Panc1 (cell line): ENCODE measurements at regions of chr5 and their contacts with region 1.

Region 1: GRCh38 chr5:142769741-142770631 is at the start of gene ARHGAP26:
- DNase-seq: no peak
- ATAC-seq: peak; percentile 96
- H3K4me3 ChIP-seq: peak within 1 kb of the TSS; percentile 58 to 80
- H3K27ac ChIP-seq: peak within 1 kb of the TSS; percentile 94
- H3K4me1 ChIP-seq: peaks cover 22% of the 10 kb centered on the region
- H3K27me3 ChIP-seq: no peaks in the 10 kb centered on the region
- CTCF ChIP-seq: peak; percentile 48
- total RNA-seq, gene ARHGAP26: 65.5 TPM

Region 2: DNA sequence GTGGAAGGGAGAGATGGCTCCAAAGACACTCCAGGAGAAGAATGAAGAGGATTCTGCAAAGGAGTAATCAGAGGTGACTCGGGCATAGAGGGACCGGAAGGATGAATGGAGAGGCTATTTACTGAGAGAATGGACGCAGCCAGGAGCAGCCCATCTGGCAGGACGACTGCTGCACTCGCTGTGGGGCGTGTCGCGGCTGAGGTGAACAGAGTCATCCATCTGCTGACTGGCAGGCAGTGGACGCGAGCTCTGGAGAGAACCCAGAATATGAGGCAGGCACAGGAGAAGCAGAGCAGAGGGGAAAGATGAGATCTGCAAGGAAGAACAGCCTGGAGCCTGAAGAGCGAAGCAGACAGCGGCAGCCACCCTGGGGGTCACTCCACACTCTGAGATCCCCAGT is 100.5 kb before region 1 on chr5:
- CTCF ChIA-PET with region 1: no interaction called
- POLR2A ChIA-PET with region 1: no interaction called
- in situ Hi-C with region 1: no loop called
- intact Hi-C with region 1: no loop called
- DNase-seq: no peak
- ATAC-seq: no peak
- H3K4me3 ChIP-seq: no peak overlapping the region
- H3K27ac ChIP-seq: no peak overlapping the region
- H3K4me1 ChIP-seq: no peaks in the 10 kb centered on the region
- H3K27me3 ChIP-seq: no peaks in the 10 kb centered on the region
- CTCF ChIP-seq: no peak

Region 3: DNA sequence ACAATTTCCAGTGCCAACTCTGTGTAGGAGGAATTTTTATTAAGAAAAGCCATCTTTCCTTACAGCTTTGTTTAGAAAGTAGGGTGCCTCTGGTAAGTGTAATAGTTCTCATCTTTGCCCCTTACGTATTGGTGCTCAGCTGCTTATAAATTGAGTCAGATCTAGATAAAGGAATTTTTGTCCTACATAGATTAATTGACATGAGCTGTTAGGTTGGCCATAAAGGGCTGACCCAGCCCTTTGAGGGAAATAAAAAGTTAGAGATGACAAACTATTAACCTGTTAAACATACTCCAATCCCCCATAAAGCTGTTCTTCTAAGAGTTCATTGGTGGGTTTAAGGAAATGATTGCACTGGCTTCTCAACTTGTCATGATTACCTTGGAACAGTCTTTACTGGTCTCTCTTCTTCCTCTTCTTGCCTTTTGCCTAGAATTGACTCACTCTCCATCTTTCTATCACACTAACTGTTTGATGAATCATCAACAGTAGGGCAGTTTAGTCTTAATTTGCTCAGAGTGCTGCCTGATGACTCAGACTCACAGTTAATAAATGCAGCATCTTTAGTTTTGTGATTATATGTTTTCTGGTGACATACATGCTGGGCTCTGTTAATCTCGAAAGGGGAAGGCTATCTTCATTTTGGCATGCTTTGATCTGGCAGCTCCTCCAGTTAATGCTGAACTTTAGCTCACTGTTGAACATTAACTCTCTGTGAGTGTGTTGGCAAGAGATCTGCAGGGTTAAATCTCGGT is 51.9 kb after region 1 on chr5:
- CTCF ChIA-PET with region 1: no interaction called
- POLR2A ChIA-PET with region 1: interaction called, 9 read pairs
- in situ Hi-C with region 1: no loop called
- intact Hi-C with region 1: loop called (anchors 5 kb)
- DNase-seq: peak; percentile 73
- ATAC-seq: peak; percentile 71
- H3K4me3 ChIP-seq: peak overlapping the region in 1 of 2 experiments; percentile 1; a peak in 1 of 4 replicates
- H3K27ac ChIP-seq: peak overlapping the region; percentile 99
- H3K4me1 ChIP-seq: peaks cover 95% of the 10 kb centered on the region
- H3K27me3 ChIP-seq: no peaks in the 10 kb centered on the region
- CTCF ChIP-seq: no peak

Region 4: DNA sequence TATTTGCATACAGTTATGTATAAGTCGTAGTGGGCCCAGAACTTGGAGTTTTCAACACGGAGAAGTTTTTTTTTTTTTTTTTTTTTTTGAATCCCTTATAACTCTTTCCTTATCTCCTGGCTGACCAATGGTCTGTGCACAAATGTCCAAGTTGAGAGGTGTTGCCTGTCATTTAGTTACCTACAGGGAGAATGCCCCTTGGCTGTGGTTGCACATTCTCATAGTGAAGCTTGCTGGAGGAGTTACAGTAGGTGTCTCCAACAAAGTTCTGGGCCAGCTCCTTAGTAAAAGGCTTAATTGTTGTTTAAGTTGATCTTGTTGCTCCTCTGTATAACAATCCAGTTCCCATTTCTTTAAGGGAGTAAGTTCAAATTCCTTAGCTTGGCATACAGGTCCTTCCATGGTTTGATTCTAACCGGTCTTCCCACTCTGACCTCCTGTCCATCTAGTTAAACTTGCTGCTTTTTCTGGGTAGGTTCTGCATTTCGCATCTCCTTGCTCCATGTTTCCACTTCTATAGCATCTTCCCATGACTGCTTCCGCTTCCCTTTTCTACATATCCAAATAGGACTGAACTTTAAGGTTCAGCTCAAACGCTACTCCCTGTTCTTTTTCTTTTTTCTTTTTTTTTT is 95.5 kb after region 1 on chr5:
- CTCF ChIA-PET with region 1: no interaction called
- POLR2A ChIA-PET with region 1: no interaction called
- in situ Hi-C with region 1: no loop called
- intact Hi-C with region 1: loop called (anchors 2 kb)
- DNase-seq: no peak
- ATAC-seq: no peak
- H3K4me3 ChIP-seq: no peak overlapping the region
- H3K27ac ChIP-seq: peak overlapping the region; percentile 13
- H3K4me1 ChIP-seq: peaks cover 79% of the 10 kb centered on the region
- H3K27me3 ChIP-seq: no peaks in the 10 kb centered on the region
- CTCF ChIP-seq: no peak